IMR-90 (cell line): ENCODE measurements at regions of chr16 and their contacts with region 1.

Region 1: DNA sequence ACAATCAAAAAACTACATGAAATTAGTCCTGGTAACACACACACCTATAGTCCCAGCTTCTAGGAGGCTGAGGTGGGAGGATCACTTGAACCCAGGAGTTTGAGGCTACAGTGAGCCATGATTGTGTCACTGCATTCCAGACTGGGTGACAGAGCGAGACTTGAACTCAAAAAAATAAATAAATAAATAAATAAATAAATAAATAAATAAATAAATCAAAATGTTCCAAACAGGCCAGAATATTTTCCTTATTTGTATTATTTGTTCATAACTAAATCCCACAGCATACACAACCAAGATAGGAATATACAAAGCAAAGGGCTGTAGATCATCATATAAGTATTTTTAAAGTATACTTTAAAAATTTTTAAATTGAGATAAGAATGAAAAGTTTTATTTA is 537.2 kb upstream of the CDH8 start:
- DNase-seq: no peak
- ATAC-seq: no peak
- H3K4me3 ChIP-seq: no peak overlapping the region
- H3K27ac ChIP-seq: no peak overlapping the region
- H3K4me1 ChIP-seq: no peaks in the 10 kb centered on the region
- H3K27me3 ChIP-seq: no peaks in the 10 kb centered on the region
- CTCF ChIP-seq: no peak
- POLR2A ChIP-seq: no peak
- RAD21 ChIP-seq: no peak

Region 2: DNA sequence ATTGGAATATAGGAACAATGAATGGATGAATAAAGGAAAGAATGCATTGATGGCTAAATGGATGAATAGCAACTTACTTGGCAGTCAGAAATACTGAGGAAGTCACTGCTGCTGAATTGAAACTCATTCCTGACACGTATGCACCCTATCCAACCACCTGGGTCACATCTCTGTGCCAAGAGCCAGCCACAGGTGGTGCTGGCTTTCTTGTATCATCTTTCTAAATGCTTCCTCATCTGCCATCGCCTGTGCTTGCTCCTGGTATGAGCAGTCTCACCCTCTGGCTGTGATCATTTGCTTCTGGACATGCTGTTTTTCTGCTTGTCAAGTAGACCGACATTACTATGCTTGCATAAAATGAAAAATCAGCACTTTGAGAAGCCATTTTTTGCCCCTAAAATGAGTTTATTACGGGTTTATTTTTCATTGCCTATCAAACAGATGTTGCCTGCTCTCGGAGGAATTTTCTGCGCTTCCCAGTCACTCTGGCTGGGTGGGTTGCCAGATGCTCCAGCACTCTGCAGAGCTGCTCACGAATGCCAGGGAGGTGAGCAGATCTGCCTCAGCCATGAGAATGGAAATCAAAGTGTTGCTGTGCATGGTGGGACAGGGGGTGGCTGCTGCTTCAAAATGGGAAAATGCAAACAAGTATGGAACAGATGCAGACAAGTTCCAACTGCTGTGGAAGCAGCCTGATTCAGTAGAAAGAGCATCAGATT is 812.4 kb after region 1 on chr16:
- CTCF ChIA-PET with region 1: no interaction called
- POLR2A ChIA-PET with region 1: no interaction called
- dilution Hi-C with region 1: no loop called
- in situ Hi-C with region 1: no loop called
- intact Hi-C with region 1: loop called (anchors 5 kb)
- DNase-seq: no peak
- ATAC-seq: no peak
- H3K4me3 ChIP-seq: no peak overlapping the region
- H3K27ac ChIP-seq: no peak overlapping the region
- H3K4me1 ChIP-seq: no peaks in the 10 kb centered on the region
- H3K27me3 ChIP-seq: no peaks in the 10 kb centered on the region
- CTCF ChIP-seq: no peak
- POLR2A ChIP-seq: no peak
- RAD21 ChIP-seq: no peak